ENCODE measurements at regions of chr2 and their contacts with region 1.

Region 1: DNA sequence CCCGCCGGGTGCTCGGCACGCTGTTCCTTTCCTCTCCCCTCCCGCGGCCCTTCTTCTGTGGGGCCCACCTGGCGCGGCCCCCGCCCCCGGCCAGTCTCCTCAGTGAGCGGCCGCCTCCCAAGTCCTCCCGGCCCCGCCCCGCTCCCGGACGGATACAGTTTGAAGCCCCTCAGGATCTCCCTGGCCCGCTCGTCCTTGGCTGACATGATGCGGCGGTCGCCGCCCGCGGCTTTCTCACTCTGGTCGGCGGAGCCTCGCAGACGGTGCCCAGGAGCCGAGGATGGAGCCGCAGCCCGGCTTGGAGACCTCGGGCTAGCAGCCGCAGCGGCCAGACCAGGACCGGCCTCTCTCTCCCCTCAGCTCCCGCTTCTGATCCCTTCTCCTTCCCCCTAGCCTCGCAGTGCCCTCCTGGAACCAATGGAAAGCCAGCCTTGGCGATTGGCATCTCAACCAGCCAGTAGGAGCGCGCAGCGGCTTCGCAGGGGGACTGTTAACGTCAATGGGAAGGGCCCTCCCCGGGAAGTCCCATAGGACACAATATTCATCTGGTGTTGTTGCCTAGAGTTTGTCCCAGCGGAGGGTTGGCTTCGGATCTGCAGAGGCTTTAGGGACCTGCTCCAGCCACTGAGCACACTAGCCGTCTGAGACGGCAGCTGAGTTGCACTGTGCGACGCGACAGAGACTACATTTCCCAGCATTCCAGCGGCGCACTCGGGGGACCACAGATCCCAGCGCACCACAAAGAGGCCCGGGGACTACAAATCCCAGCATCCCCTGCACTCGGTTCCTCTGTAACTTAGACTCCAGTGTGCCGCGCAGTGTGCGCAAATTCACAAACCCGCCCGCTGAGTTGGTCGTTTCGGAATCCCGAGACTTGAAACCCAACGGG is at the start of gene PDE6D:
- DNase-seq: peak; percentile 100
- H3K4me3 Mint-ChIP-seq: peak within 1 kb of the TSS; percentile 99
- H3K27ac Mint-ChIP-seq: peak within 1 kb of the TSS; percentile 93
- H3K4me1 Mint-ChIP-seq: peaks cover 53% of the 10 kb centered on the region
- H3K27me3 Mint-ChIP-seq: peaks cover 3% of the 10 kb centered on the region
- total RNA-seq, gene PDE6D: 33.4 and 36.0 TPM in 2 replicates

Region 2: DNA sequence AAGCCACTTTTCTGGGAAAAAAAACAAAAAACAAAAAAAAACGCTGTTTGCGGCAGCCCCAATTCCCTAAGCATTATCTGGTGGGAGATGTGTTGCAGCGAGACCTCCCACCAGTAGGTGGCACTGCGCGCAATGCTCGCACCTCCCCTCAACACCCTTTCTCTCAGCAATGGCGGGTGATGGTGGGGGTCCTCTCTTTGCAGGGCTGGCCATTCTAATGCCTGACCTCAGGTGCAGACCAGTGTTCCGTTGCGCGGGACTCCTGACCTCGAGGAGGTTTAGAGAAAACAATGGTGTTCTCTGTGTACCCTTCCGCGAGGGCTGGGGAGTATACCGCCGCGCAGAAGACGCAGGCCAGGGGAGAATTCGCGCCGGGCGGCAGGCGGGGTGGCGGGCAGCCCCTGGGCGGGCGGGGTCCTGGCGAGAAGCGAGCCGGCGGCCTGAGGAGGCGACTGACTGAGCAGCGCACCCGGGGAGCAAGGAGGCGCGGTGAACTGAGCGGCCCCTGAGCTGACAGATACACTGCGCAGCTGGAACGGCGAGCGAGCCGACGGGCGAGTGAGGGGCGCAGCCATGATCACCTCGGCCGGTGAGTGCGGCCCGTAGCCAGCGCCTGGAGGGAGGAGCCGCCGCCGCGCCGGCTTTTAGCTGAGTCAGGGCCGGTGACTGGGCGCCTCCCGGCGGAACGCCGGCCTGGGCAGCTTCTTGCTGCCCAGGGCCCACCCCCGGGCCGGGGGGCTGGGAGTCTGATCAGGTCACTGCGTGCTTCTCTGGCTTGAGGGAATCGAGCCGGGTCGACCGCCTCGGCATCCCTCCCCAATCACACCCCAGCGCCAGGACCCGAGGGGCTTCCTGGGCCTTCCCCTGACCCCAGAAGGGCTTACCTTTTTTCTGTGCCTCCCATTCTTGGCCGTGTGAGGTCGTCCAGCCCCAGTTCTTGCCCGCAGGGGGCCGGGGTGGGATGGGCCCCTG is 724.4 kb before region 1 on chr2 and contains the start of gene PSMD1:
- intact Hi-C with region 1: loop called (anchors 10 kb)
- DNase-seq: peak; percentile 98
- H3K4me3 Mint-ChIP-seq: peak within 1 kb of the TSS; percentile 95
- H3K27ac Mint-ChIP-seq: peak within 1 kb of the TSS; percentile 100
- H3K4me1 Mint-ChIP-seq: peaks cover 56% of the 10 kb centered on the region
- H3K27me3 Mint-ChIP-seq: peaks cover 10% of the 10 kb centered on the region
- total RNA-seq, gene PSMD1: 200 and 203 TPM in 2 replicates

Region 3: DNA sequence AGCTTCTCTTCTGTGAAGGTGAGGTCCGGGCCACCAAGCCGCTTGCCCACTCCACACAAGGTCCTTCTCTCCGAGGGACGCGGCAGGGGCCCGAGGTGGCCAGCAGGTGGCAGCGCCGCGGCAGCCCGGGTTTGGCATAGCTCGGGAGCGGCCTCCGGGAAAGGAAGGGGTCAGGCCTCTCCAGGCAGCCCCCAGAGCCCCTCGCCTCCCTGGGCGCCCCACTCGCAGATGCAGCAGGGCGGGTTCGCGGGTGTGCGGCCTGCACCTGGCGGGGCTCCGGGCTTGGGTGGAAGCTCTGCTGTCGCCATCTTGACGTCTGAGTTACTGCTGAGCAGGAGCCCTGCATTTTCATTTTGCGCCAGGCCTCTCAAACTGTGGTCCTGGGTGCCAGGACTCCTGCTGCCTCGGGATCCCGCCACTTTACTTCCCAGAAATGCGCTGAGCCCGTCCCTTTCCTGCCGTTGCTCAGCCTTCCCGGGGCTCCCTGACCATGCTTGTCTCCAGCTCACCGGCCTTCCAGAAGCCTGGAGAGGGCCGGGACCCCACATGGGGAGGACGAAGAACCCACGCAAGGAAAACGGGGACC is 298.3 kb before region 1 on chr2:
- intact Hi-C with region 1: loop called (anchors 1 kb)
- DNase-seq: peak; percentile 93
- H3K4me3 Mint-ChIP-seq: peak overlapping the region; percentile 84
- H3K27ac Mint-ChIP-seq: peak overlapping the region; percentile 94
- H3K4me1 Mint-ChIP-seq: peaks cover 10% of the 10 kb centered on the region
- H3K27me3 Mint-ChIP-seq: peaks cover 3% of the 10 kb centered on the region

Region 4: DNA sequence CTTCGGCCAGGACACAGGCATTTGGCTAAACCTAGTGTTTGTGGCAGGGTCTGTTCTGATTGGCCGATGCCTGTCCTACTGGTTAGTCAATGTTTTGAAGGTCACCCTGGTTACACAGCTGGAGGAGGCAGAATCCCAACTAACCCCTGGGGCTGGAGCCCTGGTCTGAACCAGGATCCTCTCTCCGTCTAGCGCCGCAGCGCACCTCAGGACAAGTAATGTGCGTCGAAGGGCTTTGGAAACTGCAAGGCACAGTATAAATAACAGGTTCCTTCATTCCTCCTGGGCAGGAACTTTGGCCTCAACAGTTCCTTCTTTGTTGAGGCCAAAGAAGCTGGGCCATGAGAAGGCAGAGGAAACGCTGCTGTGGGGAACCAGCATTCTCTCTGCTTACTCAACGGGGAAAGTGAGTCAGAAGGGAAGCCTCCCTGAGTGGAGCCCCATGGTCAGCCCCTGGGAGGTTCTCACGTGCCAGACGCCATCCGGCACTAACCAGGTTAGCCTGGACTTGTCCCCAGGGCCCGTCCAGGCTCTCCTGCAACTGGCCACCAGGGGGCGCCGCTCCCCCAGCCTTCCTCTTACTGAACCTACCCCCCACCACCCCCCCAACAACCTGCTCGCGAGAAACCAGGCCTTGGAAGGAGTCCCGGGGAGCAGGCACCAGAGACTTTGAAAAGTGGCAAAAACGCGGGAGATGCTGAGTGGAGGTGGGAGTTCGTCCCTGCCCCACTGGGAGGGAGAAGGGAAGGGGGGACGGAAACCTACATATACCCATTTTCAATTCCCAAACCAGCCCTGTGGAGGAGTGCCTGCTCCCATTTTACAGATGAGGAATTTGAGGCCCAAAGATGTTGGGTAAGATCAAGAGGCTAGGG is 168.7 kb before region 1 on chr2:
- intact Hi-C with region 1: loop called (anchors 1 kb)
- DNase-seq: peak; percentile 97
- H3K4me3 Mint-ChIP-seq: peak overlapping the region; percentile 86
- H3K27ac Mint-ChIP-seq: peak overlapping the region; percentile 98
- H3K4me1 Mint-ChIP-seq: peaks cover 43% of the 10 kb centered on the region
- H3K27me3 Mint-ChIP-seq: no peaks in the 10 kb centered on the region

Region 5: DNA sequence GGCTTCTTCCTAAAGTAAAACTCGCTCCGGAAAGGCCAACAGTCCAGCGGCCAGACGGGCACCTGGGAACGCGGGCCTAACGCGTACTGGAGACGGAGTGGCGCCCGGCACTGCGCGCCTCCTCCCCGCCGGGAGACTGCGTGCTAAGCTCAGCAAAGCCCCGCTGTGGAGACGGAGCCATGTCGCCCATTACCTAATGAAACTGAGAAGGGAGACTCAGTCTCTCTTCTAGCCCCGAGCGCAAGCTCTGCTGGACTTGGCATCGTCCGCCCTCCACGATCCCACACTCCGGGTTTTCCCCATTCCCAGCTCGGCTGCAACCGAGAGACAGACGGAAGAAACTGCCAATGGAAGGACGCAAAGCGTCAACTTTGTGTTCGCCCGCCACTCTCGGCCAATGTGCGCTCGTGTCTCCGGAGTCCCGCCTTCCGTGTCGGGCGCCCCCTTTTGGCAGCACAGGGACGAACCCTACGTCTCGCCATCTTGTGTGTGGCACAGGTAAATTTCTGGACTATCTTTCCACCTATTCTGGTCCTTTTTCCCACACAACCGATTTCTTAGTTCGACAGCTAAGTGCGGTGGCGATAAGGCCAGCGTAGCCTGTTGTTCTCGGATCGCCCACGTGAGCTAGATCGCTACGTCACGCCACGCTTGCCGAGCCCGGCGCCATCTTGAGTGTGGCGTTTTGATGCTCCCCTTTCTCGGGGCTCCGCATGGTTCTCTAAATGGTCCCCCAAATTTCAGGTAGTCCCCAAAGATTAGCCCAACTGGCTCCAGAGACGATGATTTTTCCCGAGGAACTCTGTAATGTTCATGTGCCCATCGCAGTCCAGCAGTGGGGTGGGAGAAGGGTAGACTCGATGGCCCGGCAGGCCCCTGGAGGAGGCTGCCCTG is 74.2 kb before region 1 on chr2:
- intact Hi-C with region 1: loop called (anchors 1 kb)
- DNase-seq: peak; percentile 99
- H3K4me3 Mint-ChIP-seq: peak overlapping the region; percentile 92
- H3K27ac Mint-ChIP-seq: peak overlapping the region; percentile 100
- H3K4me1 Mint-ChIP-seq: peaks cover 23% of the 10 kb centered on the region
- H3K27me3 Mint-ChIP-seq: peaks cover 1% of the 10 kb centered on the region

Region 6: DNA sequence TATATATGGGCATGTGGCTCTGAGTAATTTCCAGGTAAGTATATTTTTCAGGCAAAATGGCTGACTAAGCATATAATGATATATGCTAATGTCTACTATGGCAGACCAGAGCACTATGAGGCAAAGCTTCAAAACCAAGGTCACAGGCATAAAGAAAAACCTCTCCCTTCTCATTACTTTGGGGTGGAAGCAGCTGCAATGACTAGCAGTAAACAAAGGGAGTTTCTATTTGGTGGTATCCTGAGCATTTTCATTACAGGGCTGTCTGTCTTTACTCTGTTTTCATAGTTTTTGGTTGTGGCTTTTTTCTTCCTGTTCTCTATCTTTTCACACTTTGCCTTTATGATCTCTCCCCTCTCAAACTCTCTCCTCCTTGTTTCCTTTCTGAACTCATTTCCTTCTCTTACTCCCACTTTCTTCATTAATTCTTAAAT is 15.6 kb before region 1 on chr2:
- intact Hi-C with region 1: loop called (anchors 2 kb)
- DNase-seq: peak; percentile 58
- H3K4me3 Mint-ChIP-seq: no peak overlapping the region
- H3K27ac Mint-ChIP-seq: no peak overlapping the region
- H3K4me1 Mint-ChIP-seq: peaks cover 27% of the 10 kb centered on the region
- H3K27me3 Mint-ChIP-seq: no peaks in the 10 kb centered on the region

Region 7: DNA sequence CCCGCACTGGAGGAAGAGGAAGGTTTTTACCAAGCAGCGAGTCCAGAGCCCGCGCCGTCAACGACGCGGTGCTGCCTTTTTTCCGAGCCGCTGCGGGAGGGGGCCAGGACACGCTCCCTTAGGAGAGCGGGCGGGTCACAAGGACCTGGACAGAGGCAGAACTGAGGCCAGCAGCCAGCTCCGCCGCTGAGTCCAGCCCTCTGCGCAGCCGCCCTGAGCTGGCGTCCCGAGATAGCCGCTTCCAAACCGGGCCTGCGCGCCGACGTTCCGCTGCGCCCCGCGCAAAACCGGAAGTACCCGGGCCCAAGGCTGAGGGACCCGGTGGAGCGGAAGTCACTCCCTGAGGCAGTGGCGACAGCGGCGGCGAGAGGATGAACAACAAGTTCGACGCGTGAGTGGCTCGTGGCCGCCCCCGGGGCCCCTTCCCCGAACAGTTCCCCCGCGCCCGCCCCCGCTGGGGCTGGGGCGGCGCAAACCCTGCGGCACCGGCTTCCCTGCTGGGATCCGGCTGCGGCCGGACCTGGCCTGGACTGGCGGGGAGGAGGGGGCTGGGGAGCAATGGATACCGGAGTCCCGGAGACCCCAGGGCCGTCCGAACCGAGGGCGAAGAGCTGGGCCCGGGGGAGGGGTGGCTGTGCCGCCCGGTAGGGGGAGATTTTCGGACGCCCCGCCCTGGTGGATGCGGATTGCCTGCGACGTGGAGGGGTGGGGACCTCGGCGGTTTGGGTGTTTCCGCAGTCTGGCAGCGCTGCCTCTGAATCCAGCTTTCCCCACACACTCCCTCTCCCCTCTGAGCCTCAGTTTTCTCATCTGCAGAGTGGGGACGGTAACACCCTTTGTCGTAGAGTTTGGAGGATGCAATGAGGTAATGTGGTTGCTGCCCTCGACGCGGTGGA is 769.4 kb after region 1 on chr2 and contains the starts of genes EIF4E2 and TIGD1:
- intact Hi-C with region 1: loop called (anchors 2 kb)
- DNase-seq: peak; percentile 97
- H3K4me3 Mint-ChIP-seq: peak within 1 kb of the TSS; percentile 96
- H3K27ac Mint-ChIP-seq: peak within 1 kb of the TSS; percentile 100
- H3K4me1 Mint-ChIP-seq: peaks cover 61% of the 10 kb centered on the region
- H3K27me3 Mint-ChIP-seq: no peaks in the 10 kb centered on the region
- total RNA-seq, gene EIF4E2: 89.9 and 93.2 TPM in 2 replicates
- total RNA-seq, gene TIGD1: 8.5 and 9.4 TPM in 2 replicates